ENCODE measurements at regions of chrX and their contacts with region 1.

Region 1: GRCh38 chrX:71393919-71394318 is 27.8 kb downstream of the TAF1 start:
- DNase-seq: no peak
- ATAC-seq: no peak
- H3K4me3 ChIP-seq: no peak overlapping the region
- H3K4me3 Mint-ChIP-seq: no peak overlapping the region
- H3K27ac ChIP-seq: no peak overlapping the region
- H3K27ac Mint-ChIP-seq: no peak overlapping the region
- H3K4me1 ChIP-seq: no peaks in the 10 kb centered on the region
- H3K4me1 Mint-ChIP-seq: peaks cover 0 to 3% (median 2%) of the 10 kb centered on the region in 3 donors
- H3K27me3 ChIP-seq: no peaks in the 10 kb centered on the region
- H3K27me3 Mint-ChIP-seq: peaks cover 0 to 4% of the 10 kb centered on the region in 2 donors

Region 2: GRCh38 chrX:71378732-71379131 is 15.2 kb before region 1 on chrX:
- CTCF ChIA-PET with region 1: interaction called in 1 of 2 experiments, 10 read pairs
- POLR2A ChIA-PET with region 1: no interaction called
- DNase-seq: no peak
- ATAC-seq: no peak
- H3K4me3 ChIP-seq: no peak overlapping the region
- H3K4me3 Mint-ChIP-seq: no peak overlapping the region
- H3K27ac ChIP-seq: no peak overlapping the region
- H3K27ac Mint-ChIP-seq: no peak overlapping the region
- H3K4me1 ChIP-seq: no peaks in the 10 kb centered on the region
- H3K4me1 Mint-ChIP-seq: peaks cover under 1 to 6% (median under 1%) of the 10 kb centered on the region in 3 donors
- H3K27me3 ChIP-seq: no peaks in the 10 kb centered on the region
- H3K27me3 Mint-ChIP-seq: peaks cover 0 to 5% of the 10 kb centered on the region in 2 donors

Region 3: GRCh38 chrX:72572248-72573157 is 1178.6 kb after region 1 on chrX and contains the start of gene HDAC8:
- CTCF ChIA-PET with region 1: interaction called in 1 of 2 experiments, 10 read pairs
- POLR2A ChIA-PET with region 1: no interaction called
- DNase-seq: peak in 34 of 35 experiments; percentile 7 to 69 (median 32)
- ATAC-seq: peak; percentile 85 to 91 (median 87)
- H3K4me3 ChIP-seq: peak within 1 kb of the TSS; percentile 66 to 86
- H3K4me3 Mint-ChIP-seq: peak within 1 kb of the TSS; percentile 90 to 98 (median 91)
- H3K27ac ChIP-seq: peak within 1 kb of the TSS; percentile 49
- H3K27ac Mint-ChIP-seq: peak within 1 kb of the TSS; percentile 86 to 91
- H3K4me1 ChIP-seq: no peaks in the 10 kb centered on the region
- H3K4me1 Mint-ChIP-seq: peaks cover 4 to 9% (median 6%) of the 10 kb centered on the region in 3 donors
- H3K27me3 ChIP-seq: no peaks in the 10 kb centered on the region
- H3K27me3 Mint-ChIP-seq: peaks cover 0 to 15% of the 10 kb centered on the region in 2 donors
- total RNA-seq, gene HDAC8: 15.7 to 19.1 (median 16.9) TPM